ENCODE measurements at regions of chr16 and their contacts with region 1.

Region 1: GRCh38 chr16:30472328-30472942 is at the start of gene ITGAL:
- DNase-seq: peak; percentile 59
- ATAC-seq: peak; percentile 65
- H3K4me3 Mint-ChIP-seq: peak within 1 kb of the TSS; percentile 89
- H3K27ac Mint-ChIP-seq: peak within 1 kb of the TSS; percentile 94
- H3K4me1 Mint-ChIP-seq: peaks cover 60% of the 10 kb centered on the region
- H3K27me3 Mint-ChIP-seq: no peaks in the 10 kb centered on the region
- CTCF ChIP-seq: no peak
- total RNA-seq, gene ITGAL: 216 and 240 TPM in 2 replicates

Region 2: DNA sequence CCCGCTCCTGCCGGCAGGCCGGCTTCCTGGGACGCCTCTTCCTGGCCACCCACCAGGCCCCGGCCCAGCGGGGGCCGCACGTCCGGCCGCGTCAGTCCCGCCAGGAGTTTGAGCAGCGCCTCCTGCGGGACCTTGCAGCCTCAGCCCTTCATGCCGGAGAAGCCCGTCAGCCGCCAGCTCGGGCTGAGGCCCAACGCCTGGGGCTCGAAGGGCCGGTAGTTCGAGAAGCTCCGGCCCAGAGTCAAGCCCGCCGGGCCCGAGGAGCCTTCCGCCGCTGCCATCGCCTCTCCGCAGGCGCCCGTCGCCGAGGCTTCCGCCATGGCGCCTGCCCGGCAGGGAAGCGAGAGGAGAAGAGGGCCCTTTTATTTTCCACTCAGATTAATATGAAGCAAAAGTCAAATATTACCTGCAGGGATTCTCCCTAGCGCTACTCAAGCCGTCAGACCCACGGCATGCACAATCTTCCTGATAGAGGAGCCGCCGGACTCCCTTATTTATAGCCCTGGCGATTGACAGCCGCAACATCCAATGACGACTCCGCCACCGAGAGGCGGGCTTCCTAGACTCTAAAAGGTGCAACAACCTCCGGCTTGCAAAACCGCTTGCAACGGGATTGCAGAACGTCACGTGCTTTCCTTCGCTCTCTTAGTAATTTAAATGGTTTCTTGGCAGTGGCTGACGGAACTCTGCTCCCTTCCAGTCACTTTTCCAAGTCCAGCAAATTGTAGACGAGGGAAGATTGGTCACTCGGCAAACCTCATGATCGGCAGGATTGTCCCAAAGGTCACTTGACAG is 26.8 kb before region 1 on chr16 and contains the start of gene SEPHS2:
- CTCF ChIA-PET with region 1: interaction called, 18 read pairs
- POLR2A ChIA-PET with region 1: interaction called, 186 read pairs
- intact Hi-C with region 1: loop called (anchors 1 kb)
- DNase-seq: peak; percentile 87
- ATAC-seq: peak; percentile 96
- H3K4me3 Mint-ChIP-seq: peak within 1 kb of the TSS; percentile 95
- H3K27ac Mint-ChIP-seq: peak within 1 kb of the TSS; percentile 96
- H3K4me1 Mint-ChIP-seq: peaks cover 45% of the 10 kb centered on the region
- H3K27me3 Mint-ChIP-seq: no peaks in the 10 kb centered on the region
- CTCF ChIP-seq: no peak
- total RNA-seq, gene SEPHS2: 79.1 and 80.0 TPM in 2 replicates

Region 3: GRCh38 chr16:30491744-30492308 is 19.4 kb after region 1 on chr16:
- CTCF ChIA-PET with region 1: no interaction called
- POLR2A ChIA-PET with region 1: interaction called, 6 read pairs
- intact Hi-C with region 1: loop called (anchors 2 kb)
- DNase-seq: no peak
- ATAC-seq: no peak
- H3K4me3 Mint-ChIP-seq: no peak overlapping the region
- H3K27ac Mint-ChIP-seq: peak overlapping the region; percentile 9
- H3K4me1 Mint-ChIP-seq: peaks cover 4% of the 10 kb centered on the region
- H3K27me3 Mint-ChIP-seq: no peaks in the 10 kb centered on the region
- CTCF ChIP-seq: no peak

Region 4: DNA sequence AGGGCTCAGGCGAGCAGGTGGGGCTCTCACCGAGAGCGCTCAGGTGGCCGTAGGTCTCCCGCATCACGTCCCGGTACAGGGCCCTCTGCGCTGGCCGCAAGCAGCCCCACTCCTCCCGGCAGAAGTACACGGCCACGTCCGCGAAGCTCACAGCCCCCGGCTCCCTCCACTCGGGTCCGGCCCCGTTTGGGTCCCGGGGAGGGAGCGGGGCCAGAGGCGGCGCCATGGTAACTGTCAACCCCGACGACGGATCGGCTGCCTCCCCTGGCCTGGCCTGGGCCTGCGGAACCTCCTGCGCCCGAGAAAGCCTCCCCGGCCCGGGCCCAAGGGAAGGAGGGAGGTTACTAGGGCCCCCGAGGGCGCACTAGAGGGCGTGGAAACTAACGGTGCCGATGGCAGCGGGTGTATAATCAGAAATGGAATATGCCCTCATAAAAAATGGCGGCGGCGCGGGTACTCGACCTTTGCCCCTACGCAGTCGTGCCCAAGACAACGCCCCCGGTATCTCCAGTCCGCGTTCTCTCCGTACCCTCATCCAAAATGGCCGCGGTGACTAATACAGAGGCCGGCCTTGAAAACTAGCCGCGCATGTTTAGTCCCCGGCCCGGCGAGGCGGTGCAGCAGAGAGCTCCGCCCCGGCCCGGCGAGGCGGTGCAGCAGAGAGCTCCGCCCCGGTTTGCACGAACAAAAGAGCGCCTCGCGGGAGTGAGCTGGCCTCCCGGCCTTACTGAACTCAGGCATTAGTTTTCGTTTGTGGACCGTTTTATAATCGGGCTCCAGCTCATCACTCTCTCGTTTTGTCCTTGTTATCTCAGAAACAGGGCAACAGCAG is 85.7 kb after region 1 on chr16 and contains the start of gene ZNF764:
- CTCF ChIA-PET with region 1: no interaction called
- POLR2A ChIA-PET with region 1: interaction called, 10 read pairs
- intact Hi-C with region 1: no loop called
- DNase-seq: peak; percentile 91
- ATAC-seq: peak; percentile 93
- H3K4me3 Mint-ChIP-seq: peak within 1 kb of the TSS; percentile 83
- H3K27ac Mint-ChIP-seq: peak within 1 kb of the TSS; percentile 84
- H3K4me1 Mint-ChIP-seq: peaks cover 43% of the 10 kb centered on the region
- H3K27me3 Mint-ChIP-seq: no peaks in the 10 kb centered on the region
- CTCF ChIP-seq: no peak
- total RNA-seq, gene ZNF764: 16.1 and 19.2 TPM in 2 replicates

Region 5: DNA sequence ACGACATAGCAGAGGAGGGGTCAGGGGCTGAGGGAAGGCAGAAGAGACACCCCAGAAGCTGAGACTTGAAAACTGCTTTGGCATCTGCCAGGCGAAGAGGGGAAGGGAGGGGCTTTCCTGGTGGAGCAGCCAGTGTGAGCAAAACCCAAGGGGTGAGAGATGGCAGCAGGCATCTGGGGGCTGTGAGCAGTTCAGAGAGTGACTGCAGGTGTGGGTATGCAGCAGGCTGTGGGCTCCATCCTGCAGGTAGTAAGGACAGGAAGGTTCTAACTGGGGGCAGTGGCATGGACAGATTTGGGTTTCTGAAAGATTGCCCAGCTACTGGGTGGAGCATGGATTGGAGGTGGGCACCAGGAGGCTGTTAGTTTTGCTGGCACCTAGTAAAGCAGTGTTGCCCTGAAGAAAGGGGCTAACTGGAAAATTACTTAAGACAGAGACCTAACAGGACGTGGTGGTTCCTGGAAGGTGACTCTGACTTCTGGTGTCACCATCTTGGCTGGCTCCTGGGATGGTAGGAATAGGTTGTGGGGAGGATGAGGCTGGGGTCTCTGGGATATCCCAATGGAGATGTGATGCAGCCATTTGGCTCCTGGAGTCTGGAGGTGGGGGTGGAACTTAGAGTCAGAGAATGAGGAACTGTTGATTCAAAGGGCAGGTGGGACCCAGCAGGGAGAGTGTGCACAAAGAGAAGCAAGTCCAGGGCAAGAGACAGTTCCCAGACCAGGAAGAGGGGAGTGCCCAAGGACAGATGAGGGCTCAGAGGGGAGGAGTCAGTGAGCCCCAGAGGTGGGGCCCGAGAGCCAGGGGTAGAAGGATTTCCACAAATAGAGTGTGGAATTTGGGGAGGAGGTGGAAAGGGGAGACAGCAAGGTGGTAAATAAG is 410.2 kb after region 1 on chr16:
- CTCF ChIA-PET with region 1: no interaction called
- POLR2A ChIA-PET with region 1: no interaction called
- intact Hi-C with region 1: no loop called
- DNase-seq: no peak
- ATAC-seq: no peak
- H3K4me3 Mint-ChIP-seq: no peak overlapping the region
- H3K27ac Mint-ChIP-seq: peak overlapping the region; percentile 9
- H3K4me1 Mint-ChIP-seq: peaks cover 30% of the 10 kb centered on the region
- H3K27me3 Mint-ChIP-seq: no peaks in the 10 kb centered on the region
- CTCF ChIP-seq: no peak

Measured in activated B cell treated with CpG ODN at 0.5 μM for 24 hours (primary cell).